ENCODE measurements at regions of chr17 and their contacts with region 1.

Region 1: GRCh38 chr17:76264755-76265596 is at the start of gene UBALD2:
- DNase-seq: peak; percentile 99
- ATAC-seq: peak; percentile 81
- H3K4me3 Mint-ChIP-seq: peak within 1 kb of the TSS; percentile 96
- H3K27ac Mint-ChIP-seq: peak within 1 kb of the TSS; percentile 100
- H3K4me1 Mint-ChIP-seq: peaks cover 52% of the 10 kb centered on the region
- H3K27me3 Mint-ChIP-seq: no peaks in the 10 kb centered on the region
- total RNA-seq, gene UBALD2: 299 to 639 TPM

Region 2: GRCh38 chr17:75779231-75779986 is 485.6 kb before region 1 on chr17:
- CTCF ChIA-PET with region 1: interaction called, 3 read pairs
- POLR2A ChIA-PET with region 1: interaction called, 6 read pairs
- intact Hi-C with region 1: loop called (anchors 1 to 5 kb)
- DNase-seq: peak; percentile 96
- ATAC-seq: peak; percentile 69
- H3K4me3 Mint-ChIP-seq: peak overlapping the region; percentile 98
- H3K27ac Mint-ChIP-seq: peak overlapping the region; percentile 99
- H3K4me1 Mint-ChIP-seq: peaks cover 46% of the 10 kb centered on the region
- H3K27me3 Mint-ChIP-seq: peaks cover 1% of the 10 kb centered on the region

Region 3: DNA sequence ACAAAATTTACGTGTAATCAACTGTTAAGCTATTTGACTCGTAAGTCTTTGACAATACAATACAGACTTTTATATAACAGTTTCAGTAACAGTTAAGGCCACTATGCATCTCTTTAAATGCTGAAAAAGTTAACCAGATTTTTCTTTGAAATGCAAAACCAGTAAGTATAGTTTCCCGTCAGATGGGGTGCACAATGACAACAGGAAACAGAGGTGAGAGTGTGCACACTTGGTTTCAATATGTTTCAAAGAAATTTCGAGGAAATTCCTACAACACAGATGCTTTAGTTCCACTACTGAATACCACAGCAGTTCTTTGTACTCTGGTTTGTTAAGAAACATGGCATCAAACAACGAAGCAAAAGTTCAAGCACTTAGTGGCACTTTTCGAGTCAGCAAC is 73.1 kb before region 1 on chr17:
- CTCF ChIA-PET with region 1: interaction called, 10 read pairs
- POLR2A ChIA-PET with region 1: interaction called, 28 read pairs
- intact Hi-C with region 1: loop called (anchors 1 kb)
- DNase-seq: peak; percentile 63
- ATAC-seq: peak; percentile 79
- H3K4me3 Mint-ChIP-seq: peak overlapping the region; percentile 61
- H3K27ac Mint-ChIP-seq: peak overlapping the region; percentile 96
- H3K4me1 Mint-ChIP-seq: peaks cover 80% of the 10 kb centered on the region
- H3K27me3 Mint-ChIP-seq: no peaks in the 10 kb centered on the region

Region 4: DNA sequence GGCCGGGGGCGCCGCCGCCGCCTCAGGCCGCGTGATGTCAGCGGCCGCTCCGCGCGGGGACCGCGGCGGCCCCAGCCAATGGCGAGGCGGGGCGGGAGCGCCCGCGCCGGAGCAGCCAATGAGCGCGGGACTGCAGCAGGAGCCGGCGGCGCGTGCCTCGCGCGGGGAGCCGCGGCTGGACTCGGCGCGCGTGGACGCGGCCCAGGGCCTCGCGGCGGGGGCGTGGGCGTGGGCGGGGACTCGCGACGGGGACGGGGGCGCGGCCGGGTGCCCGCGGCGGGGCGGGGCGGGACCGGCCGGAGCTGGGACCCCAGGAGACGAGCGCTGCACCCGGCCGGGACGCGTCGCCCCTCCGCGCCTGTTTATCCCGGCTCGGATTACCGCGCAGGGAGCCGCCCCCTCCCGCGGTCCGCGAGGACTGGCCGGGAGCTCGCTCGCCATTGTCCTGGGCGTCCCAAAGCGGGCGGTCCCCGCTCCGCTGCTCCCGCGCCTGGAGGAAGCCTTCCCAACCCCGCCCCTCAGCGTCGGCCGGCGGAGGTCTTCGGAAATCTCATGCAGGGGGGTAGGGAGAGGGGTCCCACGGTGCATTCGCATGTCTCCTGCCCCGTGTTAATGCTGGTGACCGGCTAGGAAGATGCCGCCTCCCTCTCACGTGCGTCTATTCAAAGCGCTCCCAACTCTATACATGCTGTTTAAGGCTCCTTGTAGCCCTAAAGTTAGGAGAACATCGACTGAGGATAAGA is 24.3 kb before region 1 on chr17 and contains the start of gene RNF157:
- CTCF ChIA-PET with region 1: interaction called, 19 read pairs
- POLR2A ChIA-PET with region 1: interaction called, 28 read pairs
- intact Hi-C with region 1: loop called in 1 of 2 experiments (anchors 1 kb)
- DNase-seq: peak; percentile 73
- ATAC-seq: peak; percentile 84
- H3K4me3 Mint-ChIP-seq: peak within 1 kb of the TSS; percentile 78
- H3K27ac Mint-ChIP-seq: peak within 1 kb of the TSS; percentile 88
- H3K4me1 Mint-ChIP-seq: peaks cover 58% of the 10 kb centered on the region
- H3K27me3 Mint-ChIP-seq: peaks cover 2% of the 10 kb centered on the region
- total RNA-seq, gene RNF157: 24.0 to 39.4 TPM

Region 5: DNA sequence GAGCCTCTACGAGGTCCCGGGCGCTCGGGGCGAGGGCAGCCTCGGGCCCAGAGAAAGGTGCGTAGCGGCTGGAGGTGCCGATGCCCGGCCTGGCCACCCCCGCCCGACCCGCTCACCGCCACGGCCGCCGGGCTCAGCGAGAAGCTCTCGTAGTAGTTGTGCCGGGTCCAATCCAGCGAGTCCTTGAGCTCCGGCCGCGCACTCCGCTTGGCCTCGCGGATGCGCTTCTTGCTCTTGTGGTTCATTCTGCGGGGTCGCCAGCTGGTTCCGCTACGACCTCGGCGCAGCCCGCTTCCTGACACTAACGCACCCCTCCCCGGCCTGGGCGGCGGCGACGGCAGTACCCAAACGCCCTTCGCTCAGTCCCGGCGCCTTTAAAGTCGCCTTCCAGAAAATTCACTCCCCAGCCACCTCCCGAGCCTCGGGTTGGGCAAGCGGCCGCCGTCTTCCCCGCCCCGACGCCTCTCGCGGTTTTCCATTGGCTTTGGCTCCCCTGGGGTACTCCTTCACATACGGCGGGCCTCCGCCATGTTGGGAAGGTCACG is 461.3 kb after region 1 on chr17 and contains the start of gene JMJD6:
- CTCF ChIA-PET with region 1: no interaction called
- POLR2A ChIA-PET with region 1: no interaction called
- intact Hi-C with region 1: loop called (anchors 2 to 10 kb)
- DNase-seq: peak; percentile 97
- ATAC-seq: peak; percentile 87
- H3K4me3 Mint-ChIP-seq: peak within 1 kb of the TSS; percentile 97
- H3K27ac Mint-ChIP-seq: peak within 1 kb of the TSS; percentile 98
- H3K4me1 Mint-ChIP-seq: peaks cover 54% of the 10 kb centered on the region
- H3K27me3 Mint-ChIP-seq: no peaks in the 10 kb centered on the region
- total RNA-seq, gene JMJD6: 51.3 to 65.5 TPM